H1 (cell line): ENCODE measurements at regions of chr17 and their contacts with region 1.

Region 1: GRCh38 chr17:74619077-74619673 is 4.4 kb downstream of the CD300E start:
- DNase-seq: no peak
- H3K4me3 ChIP-seq: no peak overlapping the region
- H3K27ac ChIP-seq: no peak overlapping the region
- H3K4me1 ChIP-seq: no peaks in the 10 kb centered on the region
- H3K27me3 ChIP-seq: peaks cover 0 to 7% (median 3%) of the 10 kb centered on the region in 4 experiments; a peak in 3 of 7 replicates
- CTCF ChIP-seq: no peak
- EP300 ChIP-seq: no peak
- POLR2A ChIP-seq: no peak
- RAD21 ChIP-seq: no peak

Region 2: DNA sequence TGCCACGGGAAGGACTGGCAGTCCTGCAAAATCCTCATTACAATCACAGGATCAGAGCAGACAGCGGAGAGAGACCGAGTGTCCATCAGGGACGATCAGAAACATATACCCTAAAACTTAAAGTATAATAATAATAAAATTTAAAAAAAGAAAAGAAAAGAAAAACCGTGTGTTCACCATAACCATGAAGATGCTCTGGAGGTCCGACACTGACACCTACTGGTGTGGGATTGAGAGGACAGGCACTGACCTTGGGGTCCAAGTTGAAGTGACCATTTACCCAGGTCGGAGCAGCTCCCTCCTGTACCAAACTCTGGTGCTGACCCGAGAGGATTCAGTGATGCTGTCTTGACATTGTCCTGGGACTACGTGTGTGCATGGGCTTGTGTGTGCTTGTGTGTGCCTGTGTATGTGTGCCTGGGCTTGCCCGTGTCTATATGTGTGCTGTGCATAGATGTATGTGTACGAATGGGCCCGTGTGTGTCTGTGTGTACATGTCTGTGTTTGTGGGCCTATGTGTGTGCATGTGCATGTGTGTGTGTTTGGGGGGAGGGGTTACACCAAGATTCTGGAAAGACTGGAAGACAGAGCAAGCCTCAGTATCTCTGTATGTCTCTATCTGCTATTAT is 17.1 kb before region 1 on chr17:
- CTCF ChIA-PET with region 1: interaction called, 12 read pairs
- POLR2A ChIA-PET with region 1: no interaction called
- DNase-seq: peak in 1 of 2 experiments; percentile 65
- H3K4me3 ChIP-seq: no peak overlapping the region
- H3K27ac ChIP-seq: no peak overlapping the region
- H3K4me1 ChIP-seq: peaks cover 0 to 6% (median 2%) of the 10 kb centered on the region in 4 experiments; a peak in 1 of 7 replicates
- H3K27me3 ChIP-seq: peaks cover 0 to 2% (median 0%) of the 10 kb centered on the region in 4 experiments; a peak in 1 of 7 replicates
- CTCF ChIP-seq: peak; percentile 72 to 77 (median 73)
- EP300 ChIP-seq: no peak
- POLR2A ChIP-seq: no peak
- RAD21 ChIP-seq: peak; percentile 79 to 83